AG04450 (cell line): ENCODE measurements at regions of chr12 and their contacts with region 1.

Region 1: DNA sequence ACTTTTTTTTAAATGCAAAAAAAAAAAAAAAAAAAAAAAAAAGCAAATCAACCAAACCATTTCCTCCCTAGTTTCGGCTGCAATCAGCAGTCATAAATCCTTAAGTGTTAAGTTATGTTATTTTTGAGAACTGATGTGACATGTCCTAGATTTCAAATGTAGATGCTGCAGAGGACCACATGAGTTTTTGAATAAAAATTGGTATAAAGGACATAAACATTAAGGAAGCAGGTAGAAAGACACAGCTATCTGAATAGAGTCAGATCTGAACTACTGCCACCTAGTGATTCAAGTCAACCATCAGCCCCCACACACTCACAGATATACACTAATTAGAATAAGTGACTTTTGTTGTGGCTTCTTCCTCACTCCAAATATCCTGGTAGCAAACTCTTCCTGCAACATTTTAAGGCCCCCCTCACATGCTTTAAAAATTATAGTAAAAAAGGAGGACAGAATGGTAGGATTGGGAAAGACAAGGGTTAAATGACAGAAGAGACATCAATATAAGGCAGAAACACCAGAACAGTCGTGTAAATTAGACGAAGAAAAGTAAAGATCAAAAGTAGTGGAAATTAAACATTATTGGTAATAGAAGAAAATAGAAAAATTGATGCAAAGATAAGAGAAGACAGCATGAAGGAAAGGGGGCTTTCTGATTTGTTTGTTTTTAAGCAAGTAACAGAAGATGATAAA is 394.5 kb upstream of the ATP2B1 start:
- DNase-seq: no peak
- H3K4me3 ChIP-seq: no peak overlapping the region
- H3K27ac ChIP-seq: no peak overlapping the region
- H3K27me3 ChIP-seq: no peaks in the 10 kb centered on the region
- CTCF ChIP-seq: peak; percentile 73

Region 2: GRCh38 chr12:89542912-89543592 is 560.1 kb before region 1 on chr12:
- CTCF ChIA-PET with region 1: interaction called, 11 read pairs
- POLR2A ChIA-PET with region 1: no interaction called
- DNase-seq: peak; percentile 52
- H3K4me3 ChIP-seq: no peak overlapping the region
- H3K27ac ChIP-seq: no peak overlapping the region
- H3K27me3 ChIP-seq: no peaks in the 10 kb centered on the region
- CTCF ChIP-seq: peak; percentile 94

Region 3: DNA sequence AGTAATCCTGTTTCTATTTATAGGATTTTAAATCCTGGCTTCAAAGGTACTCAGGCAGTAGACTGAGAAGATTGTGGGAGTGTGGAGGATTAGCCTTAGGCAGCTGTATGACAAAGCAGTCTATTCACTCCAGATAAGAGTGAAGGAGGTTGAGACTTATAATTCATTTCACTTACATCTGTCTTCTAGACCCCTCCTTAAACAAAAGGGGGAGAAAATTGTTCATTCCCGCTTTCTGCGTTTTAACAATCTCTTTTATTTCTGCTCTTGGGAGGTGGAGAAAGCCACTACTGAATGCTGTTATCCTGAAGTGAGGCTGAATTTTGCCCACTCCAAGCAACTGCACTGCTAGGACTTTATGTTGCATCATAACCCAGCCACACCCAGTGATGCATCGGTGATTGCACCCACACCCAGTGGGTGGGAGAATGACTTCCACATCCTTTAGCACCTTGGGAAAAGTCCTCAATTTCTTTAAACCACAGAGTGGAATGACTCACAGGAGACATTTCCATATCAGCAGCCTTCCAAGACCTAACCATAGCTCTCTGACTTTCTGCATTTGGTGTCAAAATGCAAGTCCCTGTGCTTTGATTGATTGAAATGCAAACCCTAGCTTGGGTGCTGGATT is 12.0 kb before region 1 on chr12:
- CTCF ChIA-PET with region 1: interaction called, 10 read pairs
- POLR2A ChIA-PET with region 1: no interaction called
- DNase-seq: peak; percentile 63
- H3K4me3 ChIP-seq: no peak overlapping the region
- H3K27ac ChIP-seq: no peak overlapping the region
- H3K27me3 ChIP-seq: no peaks in the 10 kb centered on the region
- CTCF ChIP-seq: no peak

Region 4: DNA sequence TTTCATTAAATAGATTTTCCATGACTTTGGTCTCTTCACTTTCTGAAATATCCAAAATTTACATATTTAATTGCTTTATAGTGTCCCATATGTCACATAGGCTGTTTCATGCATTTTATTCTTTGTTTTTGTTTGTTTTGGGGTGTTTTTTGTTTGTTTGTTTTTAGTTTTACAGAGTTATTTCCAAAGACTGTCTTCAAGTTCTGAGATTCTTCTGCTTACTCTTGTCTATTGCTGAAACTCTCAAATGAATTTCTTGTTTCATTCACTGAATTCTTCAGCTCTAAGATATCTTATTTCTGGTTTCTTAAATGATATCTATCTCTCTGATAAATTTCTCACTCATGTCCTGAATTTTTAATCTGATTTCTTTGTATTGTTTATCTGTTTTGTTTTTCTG is 17.5 kb after region 1 on chr12:
- CTCF ChIA-PET with region 1: no interaction called
- POLR2A ChIA-PET with region 1: no interaction called
- DNase-seq: no peak
- H3K4me3 ChIP-seq: no peak overlapping the region
- H3K27ac ChIP-seq: no peak overlapping the region
- H3K27me3 ChIP-seq: no peaks in the 10 kb centered on the region
- CTCF ChIP-seq: no peak